GM12878 (cell line): ENCODE measurements at regions of chr14 and their contacts with region 1.

Region 1: DNA sequence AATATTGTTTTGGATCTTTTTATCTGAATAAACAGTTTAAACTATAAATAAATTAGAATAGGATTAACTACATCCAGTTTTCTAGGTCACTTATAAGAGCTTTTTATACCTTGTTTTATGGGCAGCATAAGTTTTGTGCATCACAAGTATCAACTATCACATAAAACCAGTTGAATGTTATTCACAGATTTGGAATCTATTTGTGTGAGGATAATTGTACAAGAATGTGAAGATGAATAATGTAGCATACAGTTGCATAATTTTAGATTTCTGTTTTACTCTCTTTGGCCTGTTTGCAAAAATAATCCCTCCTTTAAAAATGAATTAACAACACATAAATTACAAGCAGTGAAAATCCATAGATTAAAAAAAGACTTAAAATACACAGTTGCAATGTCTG is 88.8 kb downstream of the SCFD1 start:
- DNase-seq: no peak
- ATAC-seq: no peak
- H3K4me3 ChIP-seq: no peak overlapping the region
- H3K27ac ChIP-seq: no peak overlapping the region
- H3K4me1 ChIP-seq: no peaks in the 10 kb centered on the region
- H3K27me3 ChIP-seq: no peaks in the 10 kb centered on the region
- CTCF ChIP-seq: no peak
- EP300 ChIP-seq: no peak
- POLR2A ChIP-seq: no peak
- RAD21 ChIP-seq: no peak

Region 2: GRCh38 chr14:30623412-30624131 is 87.3 kb before region 1 on chr14:
- CTCF ChIA-PET with region 1: no interaction called
- POLR2A ChIA-PET with region 1: no interaction called
- RAD21 ChIA-PET with region 1: no interaction called
- SMC1A ChIA-PET with region 1: no interaction called
- in situ Hi-C with region 1: no loop called
- intact Hi-C with region 1: no loop called
- DNase-seq: no peak
- ATAC-seq: no peak
- H3K4me3 ChIP-seq: peak overlapping the region; percentile 97
- H3K27ac ChIP-seq: no peak overlapping the region
- H3K4me1 ChIP-seq: peaks cover 24% of the 10 kb centered on the region
- H3K27me3 ChIP-seq: no peaks in the 10 kb centered on the region
- CTCF ChIP-seq: no peak
- EP300 ChIP-seq: no peak
- POLR2A ChIP-seq: no peak
- RAD21 ChIP-seq: no peak

Region 3: DNA sequence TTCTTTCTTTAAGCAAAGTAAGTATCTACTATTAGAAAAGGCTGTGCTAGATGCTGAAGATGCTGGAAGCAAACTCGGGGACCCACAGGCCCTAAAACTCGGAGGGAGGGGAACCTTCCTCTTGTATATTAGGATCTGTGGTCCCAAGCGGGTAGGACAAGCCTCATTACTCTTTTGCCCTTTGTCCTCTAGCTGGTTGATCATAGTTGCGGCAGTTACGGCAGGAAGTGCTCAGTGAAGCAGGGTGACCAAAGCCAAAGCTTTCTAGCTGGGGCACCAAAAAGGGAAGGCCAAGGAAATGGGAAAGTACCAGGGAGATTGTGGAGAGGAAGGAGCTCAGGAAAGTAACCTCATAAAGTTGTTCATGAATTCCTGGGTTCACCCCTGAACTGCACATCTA is 12.4 kb before region 1 on chr14:
- CTCF ChIA-PET with region 1: interaction called, 3 read pairs
- POLR2A ChIA-PET with region 1: no interaction called
- RAD21 ChIA-PET with region 1: no interaction called
- SMC1A ChIA-PET with region 1: interaction called, 10 read pairs
- in situ Hi-C with region 1: no loop called
- intact Hi-C with region 1: no loop called
- DNase-seq: no peak
- ATAC-seq: no peak
- H3K4me3 ChIP-seq: no peak overlapping the region
- H3K27ac ChIP-seq: no peak overlapping the region
- H3K4me1 ChIP-seq: no peaks in the 10 kb centered on the region
- H3K27me3 ChIP-seq: no peaks in the 10 kb centered on the region
- CTCF ChIP-seq: no peak
- EP300 ChIP-seq: no peak
- POLR2A ChIP-seq: no peak
- RAD21 ChIP-seq: no peak

Region 4: DNA sequence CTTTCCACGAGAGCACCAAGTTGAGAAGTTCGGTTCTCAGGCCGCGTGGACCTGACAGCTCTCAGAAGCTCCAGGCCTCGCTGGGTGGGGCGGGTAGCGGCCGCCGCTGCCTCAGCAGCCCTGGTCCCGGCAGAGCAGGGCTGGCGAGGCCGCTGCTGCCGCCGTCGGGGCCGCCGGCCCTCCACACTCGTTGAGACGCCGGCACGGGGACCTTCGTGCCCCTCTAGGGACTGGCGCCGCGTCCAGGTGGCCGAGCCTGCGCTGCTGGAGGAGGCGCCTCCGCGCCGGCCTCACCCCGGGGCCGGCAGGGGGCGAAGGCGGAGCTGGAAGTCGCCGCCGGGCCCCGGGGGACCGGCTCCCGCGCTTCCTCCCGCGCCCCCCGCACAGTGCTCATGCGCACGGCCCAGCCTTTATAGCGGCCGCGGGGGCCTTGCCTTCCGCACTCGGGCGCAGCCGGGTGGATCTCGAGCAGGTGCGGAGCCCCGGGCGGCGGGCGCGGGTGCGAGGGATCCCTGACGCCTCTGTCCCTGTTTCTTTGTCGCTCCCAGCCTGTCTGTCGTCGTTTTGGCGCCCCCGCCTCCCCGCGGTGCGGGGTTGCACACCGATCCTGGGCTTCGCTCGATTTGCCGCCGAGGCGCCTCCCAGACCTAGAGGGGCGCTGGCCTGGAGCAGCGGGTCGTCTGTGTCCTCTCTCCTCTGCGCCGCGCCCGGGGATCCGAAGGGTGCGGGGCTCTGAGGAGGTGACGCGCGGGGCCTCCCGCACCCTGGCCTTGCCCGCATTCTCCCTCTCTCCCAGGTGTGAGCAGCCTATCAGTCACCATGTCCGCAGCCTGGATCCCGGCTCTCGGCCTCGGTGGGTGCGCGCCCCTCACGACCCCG is 163.5 kb after region 1 on chr14 and contains the start of gene COCH:
- CTCF ChIA-PET with region 1: no interaction called
- POLR2A ChIA-PET with region 1: no interaction called
- RAD21 ChIA-PET with region 1: no interaction called
- SMC1A ChIA-PET with region 1: no interaction called
- in situ Hi-C with region 1: no loop called
- intact Hi-C with region 1: loop called (anchors 5 kb)
- DNase-seq: no peak
- ATAC-seq: peak; percentile 88
- H3K4me3 ChIP-seq: peak within 1 kb of the TSS; percentile 66
- H3K27ac ChIP-seq: no peak within 1 kb of the TSS
- H3K4me1 ChIP-seq: peaks cover 11% of the 10 kb centered on the region
- H3K27me3 ChIP-seq: peaks cover 2 to 6% of the 10 kb centered on the region in 2 experiments; a peak in 2 of 4 replicates
- CTCF ChIP-seq: peak; percentile 33 to 50 (median 40); a peak in 3 of 6 replicates
- EP300 ChIP-seq: no peak
- POLR2A ChIP-seq: peak; percentile 80
- RAD21 ChIP-seq: peak; percentile 19; the same call in 1 of the 2 replicates
- polyA plus RNA-seq, gene COCH: 2.6 to 4.6 TPM